CD8-positive, alpha-beta T cell (primary cell): ENCODE measurements at regions of chr6 and their contacts with region 1.

Region 1: GRCh38 chr6:131199568-131200272 is 64.5 kb downstream of the AKAP7 start:
- DNase-seq: peak; percentile 51 to 95 (median 71)
- ATAC-seq: peak; percentile 95
- H3K4me3 ChIP-seq: peak overlapping the region; percentile 31 to 35
- H3K4me3 Mint-ChIP-seq: peak overlapping the region; percentile 80
- H3K27ac ChIP-seq: peak overlapping the region; percentile 73 to 81
- H3K27ac Mint-ChIP-seq: peak overlapping the region; percentile 97
- H3K4me1 ChIP-seq: peaks cover 58% of the 10 kb centered on the region
- H3K4me1 Mint-ChIP-seq: peaks cover 61% of the 10 kb centered on the region
- H3K27me3 ChIP-seq: no peaks in the 10 kb centered on the region
- H3K27me3 Mint-ChIP-seq: no peaks in the 10 kb centered on the region
- CTCF ChIP-seq: peak; percentile 83

Region 2: DNA sequence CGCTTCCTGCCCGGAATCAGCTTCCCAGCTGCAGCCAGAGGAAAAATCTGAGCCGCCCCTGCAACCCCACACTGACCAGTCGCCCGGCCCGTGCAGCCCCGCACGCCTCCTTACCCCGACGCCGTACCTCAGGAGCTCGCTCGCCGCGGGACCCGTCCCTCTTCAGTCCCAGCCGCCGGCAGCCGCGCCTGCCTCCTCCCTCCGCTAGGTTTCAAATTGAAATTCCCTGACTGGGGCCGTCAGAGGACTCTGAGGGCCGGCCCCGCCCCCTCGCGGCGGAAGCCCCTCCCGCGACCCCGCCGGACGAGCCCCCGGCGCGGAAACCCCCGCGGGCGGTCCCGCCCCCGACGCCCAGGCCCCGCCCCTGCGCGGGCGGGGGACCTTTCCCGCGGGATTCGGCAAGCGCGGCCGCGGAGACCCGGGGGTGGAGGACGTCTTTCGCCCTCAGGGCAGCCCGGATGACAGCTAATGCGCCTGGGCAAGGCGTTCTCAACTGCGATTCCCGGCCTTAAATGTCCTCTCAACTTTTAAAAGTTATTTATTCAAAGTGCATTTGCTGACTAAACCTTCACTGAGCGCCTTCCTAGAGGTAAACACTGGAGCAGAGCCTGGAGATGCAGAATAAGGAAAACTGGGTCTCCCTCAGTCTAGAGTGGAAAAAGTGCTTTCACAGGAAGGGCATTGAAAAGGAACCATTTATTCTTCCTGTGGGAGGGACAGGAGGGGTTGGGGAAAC is 136.5 kb before region 1 on chr6 and contains the start of gene EPB41L2:
- CTCF ChIA-PET with region 1: no interaction called
- POLR2A ChIA-PET with region 1: no interaction called
- intact Hi-C with region 1: loop called in 1 of 2 experiments (anchors 5 kb)
- DNase-seq: peak; percentile 55 to 92 (median 79)
- ATAC-seq: peak; percentile 91
- H3K4me3 ChIP-seq: peak within 1 kb of the TSS; percentile 57 to 80
- H3K4me3 Mint-ChIP-seq: peak within 1 kb of the TSS; percentile 89
- H3K27ac ChIP-seq: peak within 1 kb of the TSS in 1 of 2 experiments; percentile 49
- H3K27ac Mint-ChIP-seq: peak within 1 kb of the TSS; percentile 76
- H3K4me1 ChIP-seq: peaks cover 10% of the 10 kb centered on the region
- H3K4me1 Mint-ChIP-seq: peaks cover 27% of the 10 kb centered on the region
- H3K27me3 ChIP-seq: no peaks in the 10 kb centered on the region
- H3K27me3 Mint-ChIP-seq: no peaks in the 10 kb centered on the region
- CTCF ChIP-seq: peak; percentile 18
- total RNA-seq, gene EPB41L2: 11.0 to 12.0 TPM

Region 3: GRCh38 chr6:131167773-131168172 is 31.9 kb before region 1 on chr6:
- CTCF ChIA-PET with region 1: no interaction called
- POLR2A ChIA-PET with region 1: no interaction called
- intact Hi-C with region 1: no loop called
- DNase-seq: no peak
- ATAC-seq: no peak
- H3K4me3 ChIP-seq: no peak overlapping the region
- H3K4me3 Mint-ChIP-seq: no peak overlapping the region
- H3K27ac ChIP-seq: no peak overlapping the region
- H3K27ac Mint-ChIP-seq: no peak overlapping the region
- H3K4me1 ChIP-seq: no peaks in the 10 kb centered on the region
- H3K4me1 Mint-ChIP-seq: no peaks in the 10 kb centered on the region
- H3K27me3 ChIP-seq: no peaks in the 10 kb centered on the region
- H3K27me3 Mint-ChIP-seq: no peaks in the 10 kb centered on the region
- CTCF ChIP-seq: no peak

Region 4: GRCh38 chr6:131213501-131213990 is 13.8 kb after region 1 on chr6:
- CTCF ChIA-PET with region 1: interaction called, 9 read pairs
- POLR2A ChIA-PET with region 1: interaction called, 7 read pairs
- intact Hi-C with region 1: loop called in 1 of 2 experiments (anchors 1 kb)
- DNase-seq: no peak
- ATAC-seq: peak; percentile 26
- H3K4me3 ChIP-seq: no peak overlapping the region
- H3K4me3 Mint-ChIP-seq: peak overlapping the region; percentile 35
- H3K27ac ChIP-seq: no peak overlapping the region
- H3K27ac Mint-ChIP-seq: peak overlapping the region; percentile 35
- H3K4me1 ChIP-seq: peaks cover 27% of the 10 kb centered on the region
- H3K4me1 Mint-ChIP-seq: peaks cover 52% of the 10 kb centered on the region
- H3K27me3 ChIP-seq: no peaks in the 10 kb centered on the region
- H3K27me3 Mint-ChIP-seq: no peaks in the 10 kb centered on the region
- CTCF ChIP-seq: no peak

Region 5: GRCh38 chr6:131368198-131368911 is 168.6 kb after region 1 on chr6:
- CTCF ChIA-PET with region 1: interaction called, 3 read pairs
- POLR2A ChIA-PET with region 1: no interaction called
- intact Hi-C with region 1: loop called in 1 of 2 experiments (anchors 5 kb)
- DNase-seq: peak in 1 of 9 experiments; percentile 1
- ATAC-seq: no peak
- H3K4me3 ChIP-seq: no peak overlapping the region
- H3K4me3 Mint-ChIP-seq: peak overlapping the region; percentile 29
- H3K27ac ChIP-seq: no peak overlapping the region
- H3K27ac Mint-ChIP-seq: peak overlapping the region; percentile 75
- H3K4me1 ChIP-seq: peaks cover 10% of the 10 kb centered on the region
- H3K4me1 Mint-ChIP-seq: peaks cover 30% of the 10 kb centered on the region
- H3K27me3 ChIP-seq: no peaks in the 10 kb centered on the region
- H3K27me3 Mint-ChIP-seq: no peaks in the 10 kb centered on the region
- CTCF ChIP-seq: no peak

Region 6: GRCh38 chr6:131532580-131533039 is 332.9 kb after region 1 on chr6:
- CTCF ChIA-PET with region 1: interaction called, 50 read pairs
- POLR2A ChIA-PET with region 1: interaction called, 36 read pairs
- intact Hi-C with region 1: loop called (anchors 1 kb)
- DNase-seq: peak in 3 of 9 experiments; percentile 8 to 31 (median 12)
- ATAC-seq: peak; percentile 43
- H3K4me3 ChIP-seq: no peak overlapping the region
- H3K4me3 Mint-ChIP-seq: no peak overlapping the region
- H3K27ac ChIP-seq: no peak overlapping the region
- H3K27ac Mint-ChIP-seq: peak overlapping the region; percentile 83
- H3K4me1 ChIP-seq: peaks cover 39% of the 10 kb centered on the region
- H3K4me1 Mint-ChIP-seq: peaks cover 52% of the 10 kb centered on the region
- H3K27me3 ChIP-seq: no peaks in the 10 kb centered on the region
- H3K27me3 Mint-ChIP-seq: no peaks in the 10 kb centered on the region
- CTCF ChIP-seq: no peak

Region 7: GRCh38 chr6:131909408-131910218 is 709.9 kb after region 1 on chr6:
- CTCF ChIA-PET with region 1: no interaction called
- POLR2A ChIA-PET with region 1: no interaction called
- intact Hi-C with region 1: loop called in 1 of 2 experiments (anchors 10 kb)
- DNase-seq: peak; percentile 51 to 77 (median 71)
- ATAC-seq: peak; percentile 93
- H3K4me3 ChIP-seq: no peak overlapping the region
- H3K4me3 Mint-ChIP-seq: no peak overlapping the region
- H3K27ac ChIP-seq: no peak overlapping the region
- H3K27ac Mint-ChIP-seq: no peak overlapping the region
- H3K4me1 ChIP-seq: peaks cover 6% of the 10 kb centered on the region
- H3K4me1 Mint-ChIP-seq: peaks cover 7% of the 10 kb centered on the region
- H3K27me3 ChIP-seq: peaks cover 0 to 10% of the 10 kb centered on the region in 2 experiments
- H3K27me3 Mint-ChIP-seq: peaks cover 23% of the 10 kb centered on the region
- CTCF ChIP-seq: peak; percentile 82